ENCODE measurements at regions of chr2 and their contacts with region 1.

Region 1: GRCh38 chr2:84495539-84496146 is 20.7 kb upstream of the DNAH6 start:
- DNase-seq: peak; percentile 45
- H3K4me3 Mint-ChIP-seq: no peak overlapping the region
- H3K27ac Mint-ChIP-seq: no peak overlapping the region
- H3K4me1 Mint-ChIP-seq: peaks cover 24% of the 10 kb centered on the region
- H3K27me3 Mint-ChIP-seq: no peaks in the 10 kb centered on the region

Region 2: DNA sequence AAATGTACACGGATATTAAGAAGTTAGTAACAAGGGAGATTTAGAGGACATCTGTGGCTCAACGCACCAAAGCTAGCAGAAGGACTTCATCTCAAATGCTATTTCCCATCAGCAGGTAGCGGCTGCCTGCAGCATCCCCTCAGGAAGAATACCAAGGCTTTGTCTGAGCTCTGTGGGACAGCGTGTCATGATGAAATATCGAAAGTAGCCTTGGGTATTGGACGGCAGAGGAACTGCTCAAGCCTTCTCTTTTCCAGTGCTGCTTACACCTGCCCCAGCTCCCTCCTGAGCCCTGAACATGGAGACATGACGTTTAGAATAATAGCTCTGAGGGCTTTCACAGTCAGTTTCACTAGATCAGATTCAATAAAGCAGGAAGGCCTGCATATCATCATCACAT is 278.2 kb before region 1 on chr2:
- CTCF ChIA-PET with region 1: no interaction called
- intact Hi-C with region 1: no loop called
- DNase-seq: no peak
- H3K4me3 Mint-ChIP-seq: no peak overlapping the region
- H3K27ac Mint-ChIP-seq: no peak overlapping the region
- H3K4me1 Mint-ChIP-seq: no peaks in the 10 kb centered on the region
- H3K27me3 Mint-ChIP-seq: peaks cover 15% of the 10 kb centered on the region

Region 3: GRCh38 chr2:84516234-84516986 is 20.8 kb after region 1 on chr2 and contains the start of gene DNAH6:
- CTCF ChIA-PET with region 1: no interaction called
- intact Hi-C with region 1: loop called (anchors 1 kb)
- DNase-seq: peak; percentile 94
- H3K4me3 Mint-ChIP-seq: peak within 1 kb of the TSS; percentile 85
- H3K27ac Mint-ChIP-seq: no peak within 1 kb of the TSS
- H3K4me1 Mint-ChIP-seq: peaks cover 22% of the 10 kb centered on the region
- H3K27me3 Mint-ChIP-seq: no peaks in the 10 kb centered on the region
- total RNA-seq, gene DNAH6: 0.07 to 0.62 TPM

Region 4: DNA sequence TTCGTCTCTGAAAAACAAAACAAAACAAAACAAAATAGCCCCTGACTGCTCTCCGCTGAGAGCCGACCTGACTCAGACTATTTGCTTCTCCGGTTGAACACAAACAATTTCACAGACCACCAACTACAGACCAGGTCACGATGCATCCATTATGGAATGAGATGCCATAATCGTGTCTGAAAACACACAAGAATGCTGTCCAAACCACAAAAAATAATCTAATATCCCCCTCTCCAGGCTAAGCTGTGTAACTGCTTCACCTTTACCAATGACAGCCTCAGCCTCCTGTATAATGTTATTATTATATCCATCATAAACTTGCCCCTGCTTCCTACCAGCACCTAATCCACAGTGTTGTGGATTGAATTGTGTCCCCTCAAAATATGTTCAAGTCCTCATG is 135.4 kb after region 1 on chr2:
- CTCF ChIA-PET with region 1: interaction called, 19 read pairs
- intact Hi-C with region 1: loop called (anchors 1 kb)
- DNase-seq: no peak
- H3K4me3 Mint-ChIP-seq: no peak overlapping the region
- H3K27ac Mint-ChIP-seq: no peak overlapping the region
- H3K4me1 Mint-ChIP-seq: peaks cover 12% of the 10 kb centered on the region
- H3K27me3 Mint-ChIP-seq: no peaks in the 10 kb centered on the region

Region 5: GRCh38 chr2:84694088-84694622 is 198.5 kb after region 1 on chr2:
- CTCF ChIA-PET with region 1: interaction called, 3 read pairs
- intact Hi-C with region 1: loop called (anchors 5 kb)
- DNase-seq: peak; percentile 41
- H3K4me3 Mint-ChIP-seq: peak overlapping the region; percentile 66
- H3K27ac Mint-ChIP-seq: peak overlapping the region; percentile 54
- H3K4me1 Mint-ChIP-seq: peaks cover 37% of the 10 kb centered on the region
- H3K27me3 Mint-ChIP-seq: no peaks in the 10 kb centered on the region

Region 6: GRCh38 chr2:84781942-84782716 is 286.5 kb after region 1 on chr2:
- CTCF ChIA-PET with region 1: no interaction called
- intact Hi-C with region 1: loop called (anchors 2 kb)
- DNase-seq: peak; percentile 78
- H3K4me3 Mint-ChIP-seq: no peak overlapping the region
- H3K27ac Mint-ChIP-seq: peak overlapping the region; percentile 83
- H3K4me1 Mint-ChIP-seq: peaks cover 68% of the 10 kb centered on the region
- H3K27me3 Mint-ChIP-seq: no peaks in the 10 kb centered on the region

Region 7: GRCh38 chr2:84865181-84865783 is 369.6 kb after region 1 on chr2:
- CTCF ChIA-PET with region 1: interaction called, 3 read pairs
- intact Hi-C with region 1: loop called (anchors 1 kb)
- DNase-seq: peak; percentile 25
- H3K4me3 Mint-ChIP-seq: no peak overlapping the region
- H3K27ac Mint-ChIP-seq: peak overlapping the region; percentile 77
- H3K4me1 Mint-ChIP-seq: peaks cover 87% of the 10 kb centered on the region
- H3K27me3 Mint-ChIP-seq: no peaks in the 10 kb centered on the region

Region 8: GRCh38 chr2:85302121-85302520 is 806.5 kb after region 1 on chr2:
- CTCF ChIA-PET with region 1: no interaction called
- intact Hi-C with region 1: loop called (anchors 1 kb)
- DNase-seq: no peak
- H3K4me3 Mint-ChIP-seq: no peak overlapping the region
- H3K27ac Mint-ChIP-seq: no peak overlapping the region
- H3K4me1 Mint-ChIP-seq: peaks cover 13% of the 10 kb centered on the region
- H3K27me3 Mint-ChIP-seq: no peaks in the 10 kb centered on the region

Measured in activated naive CD4-positive, alpha-beta T cell treated with anti-CD3 and anti-CD28 coated beads for 36 hours (primary cell).